Right cardiac atrium (tissue), 5 donors: ENCODE measurements at regions of chr12 and their contacts with region 1.

Region 1: GRCh38 chr12:113261847-113262470 is 40.7 kb downstream of the TPCN1 start:
- DNase-seq: peak in 2 of 3 donors; percentile 4 to 5
- ATAC-seq: no peak
- H3K4me3 ChIP-seq: no peak overlapping the region
- H3K27ac ChIP-seq: no peak overlapping the region
- H3K4me1 ChIP-seq: peaks cover 15% of the 10 kb centered on the region
- H3K27me3 ChIP-seq: no peaks in the 10 kb centered on the region

Region 2: DNA sequence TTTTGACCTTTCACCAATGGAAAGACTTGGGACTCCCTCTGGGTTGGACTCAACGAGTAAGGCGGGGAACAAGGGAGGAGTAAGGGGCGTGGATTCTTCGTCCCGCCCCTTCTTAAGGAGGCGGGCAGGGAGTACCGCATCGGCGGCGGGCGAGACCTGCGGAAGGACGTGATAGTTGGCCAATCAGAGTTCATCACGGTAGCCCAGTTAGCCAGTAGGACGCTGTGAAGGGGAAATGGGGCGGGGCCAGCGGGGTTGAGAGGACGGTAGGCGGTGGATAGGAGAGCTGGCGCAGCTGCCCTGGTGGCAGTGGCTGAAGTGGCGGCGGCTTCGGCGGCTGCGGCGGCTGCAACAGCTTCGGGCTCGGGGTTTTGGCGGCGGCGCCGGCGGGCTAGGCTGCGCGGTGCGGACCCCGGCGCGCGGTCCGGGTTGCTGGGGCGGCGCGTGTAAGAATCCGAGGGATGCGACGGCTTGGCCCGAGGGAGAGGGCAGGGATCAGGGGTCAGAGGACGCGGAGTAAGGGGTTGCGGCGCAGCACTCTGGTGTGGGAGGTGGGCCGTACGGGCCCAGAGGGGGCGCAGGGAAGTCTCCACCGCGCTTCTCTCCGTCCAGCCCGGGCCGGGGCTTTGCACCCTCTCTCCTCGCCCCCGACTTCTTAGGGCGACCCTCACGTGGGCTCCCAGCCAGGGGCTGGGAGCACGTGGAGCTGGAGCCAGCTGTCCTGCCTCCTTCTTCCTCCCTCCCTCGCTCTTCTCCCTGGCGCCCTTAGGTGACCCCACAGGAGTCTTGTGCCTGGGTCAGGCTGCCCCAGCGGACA is 40.6 kb before region 1 on chr12 and contains the start of gene TPCN1:
- intact Hi-C with region 1: loop called in 1 of 4 experiments (anchors 5 kb)
- DNase-seq: peak; percentile 100
- ATAC-seq: peak; percentile 97
- H3K4me3 ChIP-seq: peak within 1 kb of the TSS; percentile 63
- H3K27ac ChIP-seq: peak within 1 kb of the TSS; percentile 93
- H3K4me1 ChIP-seq: peaks cover 6% of the 10 kb centered on the region
- H3K27me3 ChIP-seq: no peaks in the 10 kb centered on the region
- total RNA-seq, gene TPCN1: 73.8 to 96.1 (median 76.6) TPM